Activated T-helper 1 cell treated with anti-CD3 and anti-CD28 coated beads, Interleukin-12 subunit alpha, Interleukin-12 subunit beta, Interleukin-2, Interleukin-4 antibody, amounts not matched to agents 30 ng/mL and 10 ng/mL and 1 ng/mL, durations not matched to agents 14 hours and 24 hours and 36 hours (primary cell): ENCODE measurements at regions of chr7 and their contacts with region 1.

Region 1: GRCh38 chr7:36389371-36390198 is at the start of gene ANLN:
- DNase-seq: peak; percentile 84
- H3K4me3 Mint-ChIP-seq: peak within 1 kb of the TSS; percentile 86
- H3K27ac Mint-ChIP-seq: peak within 1 kb of the TSS; percentile 78
- H3K4me1 Mint-ChIP-seq: peaks cover 37% of the 10 kb centered on the region
- H3K27me3 Mint-ChIP-seq: peaks cover 12% of the 10 kb centered on the region
- total RNA-seq, gene ANLN: 23.8 and 31.0 TPM in 2 replicates

Region 2: GRCh38 chr7:34991938-34992840 is 1397.4 kb before region 1 on chr7:
- intact Hi-C with region 1: loop called (anchors 2 kb)
- DNase-seq: no peak
- H3K4me3 Mint-ChIP-seq: no peak overlapping the region
- H3K27ac Mint-ChIP-seq: peak overlapping the region; percentile 77
- H3K4me1 Mint-ChIP-seq: peaks cover 17% of the 10 kb centered on the region
- H3K27me3 Mint-ChIP-seq: no peaks in the 10 kb centered on the region

Region 3: DNA sequence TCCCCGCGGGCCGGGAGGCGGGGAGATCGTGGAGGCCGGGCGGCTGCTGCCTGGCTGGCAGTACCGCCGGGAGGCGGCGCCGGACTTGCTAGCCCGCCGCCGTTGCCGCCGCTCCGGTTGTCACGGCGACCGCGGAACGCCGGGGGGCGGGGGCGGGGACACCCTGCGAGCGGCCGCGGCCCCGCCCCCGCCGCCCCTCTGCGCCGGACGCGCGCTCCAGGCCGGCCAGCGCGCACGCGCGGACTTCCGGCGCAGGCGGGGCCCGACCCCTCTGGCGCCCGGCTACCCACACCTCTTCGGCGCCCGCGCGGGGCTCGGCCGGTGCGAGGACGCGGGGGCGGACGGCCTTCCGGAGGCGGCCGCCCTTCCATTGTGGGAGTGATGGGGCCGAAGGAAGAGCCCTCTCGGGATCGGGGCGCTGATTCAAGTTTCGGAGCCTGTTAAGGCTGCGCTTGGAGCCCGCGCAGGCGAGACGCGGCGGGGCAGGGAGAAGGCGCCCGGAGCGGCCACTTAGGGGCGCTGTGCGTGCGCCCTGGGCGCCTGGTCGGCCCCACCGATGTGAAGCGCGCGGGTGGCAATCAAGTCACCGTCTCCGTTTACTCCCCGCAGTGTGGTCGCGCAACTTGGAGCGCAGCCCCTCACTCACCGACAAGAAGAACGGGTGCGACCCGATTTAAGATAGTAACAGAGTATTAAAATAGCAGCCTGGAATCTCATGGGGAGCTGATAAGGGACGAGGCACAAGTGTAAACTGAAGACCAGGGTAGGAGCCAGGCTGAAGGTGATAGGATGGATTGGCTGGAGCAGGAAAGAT is 1351.9 kb before region 1 on chr7:
- intact Hi-C with region 1: loop called (anchors 10 kb)
- DNase-seq: peak; percentile 85
- H3K4me3 Mint-ChIP-seq: peak overlapping the region; percentile 81
- H3K27ac Mint-ChIP-seq: peak overlapping the region; percentile 37
- H3K4me1 Mint-ChIP-seq: peaks cover 30% of the 10 kb centered on the region
- H3K27me3 Mint-ChIP-seq: peaks cover 13% of the 10 kb centered on the region

Region 4: GRCh38 chr7:36079446-36080025 is 310.0 kb before region 1 on chr7:
- intact Hi-C with region 1: no loop called
- DNase-seq: no peak
- H3K4me3 Mint-ChIP-seq: no peak overlapping the region
- H3K27ac Mint-ChIP-seq: no peak overlapping the region
- H3K4me1 Mint-ChIP-seq: no peaks in the 10 kb centered on the region
- H3K27me3 Mint-ChIP-seq: peaks cover 5% of the 10 kb centered on the region

Region 5: GRCh38 chr7:36115448-36116321 is 273.9 kb before region 1 on chr7:
- intact Hi-C with region 1: loop called (anchors 5 kb)
- DNase-seq: peak; percentile 60
- H3K4me3 Mint-ChIP-seq: peak overlapping the region; percentile 32
- H3K27ac Mint-ChIP-seq: peak overlapping the region; percentile 61
- H3K4me1 Mint-ChIP-seq: peaks cover 33% of the 10 kb centered on the region
- H3K27me3 Mint-ChIP-seq: peaks cover 26% of the 10 kb centered on the region

Region 6: DNA sequence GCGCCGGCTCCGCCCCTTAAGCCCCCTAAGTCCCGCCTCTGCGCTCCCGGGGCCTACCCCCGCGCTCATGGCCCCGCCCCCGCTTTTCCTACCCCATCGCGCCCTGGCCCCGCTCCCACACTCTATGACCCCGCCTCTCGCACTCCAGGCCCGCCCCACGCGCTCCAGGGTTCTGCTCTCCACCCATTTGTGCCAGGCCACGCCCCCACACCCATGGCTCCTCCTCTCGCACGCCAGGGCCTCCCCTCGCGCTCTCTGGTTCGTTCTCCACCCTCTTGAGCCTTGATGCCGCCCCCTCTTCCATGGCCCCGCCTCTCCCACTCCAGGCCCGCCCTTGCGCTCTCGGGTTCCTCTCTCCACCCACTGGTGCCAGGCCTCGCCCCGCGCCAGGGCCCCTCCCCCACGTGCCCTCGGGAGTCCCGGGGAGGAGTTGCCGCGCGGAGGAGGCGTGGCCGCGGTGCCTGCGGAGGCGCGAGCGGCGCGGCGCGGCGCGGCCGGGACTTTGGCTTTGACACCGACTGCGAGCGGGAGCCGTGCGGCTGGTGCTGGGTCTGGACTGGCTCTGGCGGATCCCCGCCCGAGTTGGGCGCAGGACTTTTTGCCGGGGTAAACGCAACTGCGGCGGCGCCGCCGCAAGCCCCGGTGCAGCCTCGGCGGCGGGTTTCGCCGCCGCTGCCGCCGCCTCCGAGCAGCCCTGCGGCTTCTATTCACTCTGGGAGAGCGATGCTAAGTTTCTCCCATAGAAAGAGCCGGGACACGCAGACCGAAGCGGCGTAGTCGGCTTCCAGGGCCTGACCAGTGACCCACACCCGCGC is 236.6 kb before region 1 on chr7 and contains the start of gene EEPD1:
- intact Hi-C with region 1: loop called (anchors 1 kb)
- DNase-seq: peak; percentile 99
- H3K4me3 Mint-ChIP-seq: peak within 1 kb of the TSS; percentile 78
- H3K27ac Mint-ChIP-seq: no peak within 1 kb of the TSS
- H3K4me1 Mint-ChIP-seq: peaks cover 13% of the 10 kb centered on the region
- H3K27me3 Mint-ChIP-seq: peaks cover 12% of the 10 kb centered on the region
- total RNA-seq, gene EEPD1: 0.91 and 1.5 TPM in 2 replicates

Region 7: DNA sequence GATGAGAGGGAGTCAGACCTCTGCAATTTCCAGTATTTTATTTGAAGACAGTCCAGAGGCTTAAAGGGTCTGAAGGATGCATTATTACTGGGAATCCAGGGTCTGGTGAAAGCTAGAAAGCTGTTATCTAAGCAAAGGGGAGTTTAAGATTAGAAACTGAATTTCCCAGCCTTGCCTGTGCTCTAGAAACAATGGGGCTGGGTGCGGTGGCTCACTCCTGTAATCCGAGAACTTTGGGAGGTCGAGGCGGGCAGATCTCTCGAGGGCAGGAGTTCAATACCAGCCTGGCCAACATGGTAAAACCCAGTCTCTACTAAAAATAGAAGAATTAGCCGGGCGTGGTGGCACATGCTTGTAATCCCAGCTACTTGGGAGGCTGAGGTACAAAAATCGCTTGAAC is 71.5 kb before region 1 on chr7:
- intact Hi-C with region 1: no loop called
- DNase-seq: no peak
- H3K4me3 Mint-ChIP-seq: no peak overlapping the region
- H3K27ac Mint-ChIP-seq: no peak overlapping the region
- H3K4me1 Mint-ChIP-seq: no peaks in the 10 kb centered on the region
- H3K27me3 Mint-ChIP-seq: peaks cover 4% of the 10 kb centered on the region

Region 8: DNA sequence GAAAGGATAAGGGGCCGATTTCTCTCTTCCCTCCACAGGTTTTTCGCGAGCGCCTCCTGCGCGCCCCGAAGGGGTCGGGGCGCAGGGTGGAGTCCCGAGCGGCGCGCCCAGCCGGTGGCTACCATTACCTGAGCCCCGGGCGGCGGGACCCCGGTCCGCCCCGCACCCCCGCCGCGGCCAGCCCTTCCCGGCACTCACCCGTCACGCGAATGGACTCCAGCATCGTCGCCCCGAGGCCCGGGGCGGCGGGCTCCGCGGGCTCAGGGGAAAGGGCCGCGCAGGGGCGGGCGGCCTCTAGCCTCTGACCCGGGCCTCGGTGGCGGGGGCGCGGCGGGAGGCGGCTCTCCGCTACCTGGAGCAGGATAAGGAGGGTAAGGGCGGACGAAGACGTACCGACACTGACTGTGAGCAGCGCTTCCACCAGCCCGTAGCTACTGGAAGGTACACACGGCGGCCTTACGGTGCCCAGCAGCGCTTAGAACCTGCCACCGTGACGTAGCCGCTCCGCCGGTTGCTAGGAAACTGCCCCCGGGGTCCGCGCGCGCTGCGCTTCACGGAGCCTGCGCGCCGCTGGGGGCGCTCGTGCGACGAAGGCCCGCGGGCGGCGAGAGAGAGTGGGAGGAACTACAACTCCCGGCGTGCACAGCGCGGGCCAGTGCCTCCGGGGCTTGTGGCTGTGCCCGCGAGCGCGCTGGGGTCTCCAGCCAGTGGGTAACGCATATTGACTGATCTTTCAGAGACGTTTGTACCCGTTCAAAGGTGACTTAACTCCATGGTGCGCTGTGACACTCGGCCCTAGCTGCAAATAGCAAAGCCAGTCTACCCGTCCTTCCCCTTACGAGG is 22.6 kb before region 1 on chr7:
- intact Hi-C with region 1: loop called (anchors 1 kb)
- DNase-seq: peak; percentile 91
- H3K4me3 Mint-ChIP-seq: peak overlapping the region; percentile 91
- H3K27ac Mint-ChIP-seq: peak overlapping the region; percentile 67
- H3K4me1 Mint-ChIP-seq: no peaks in the 10 kb centered on the region
- H3K27me3 Mint-ChIP-seq: peaks cover 31% of the 10 kb centered on the region

Region 9: GRCh38 chr7:37031571-37032257 is 642.1 kb after region 1 on chr7:
- intact Hi-C with region 1: loop called (anchors 5 kb)
- DNase-seq: peak; percentile 19
- H3K4me3 Mint-ChIP-seq: no peak overlapping the region
- H3K27ac Mint-ChIP-seq: peak overlapping the region; percentile 69
- H3K4me1 Mint-ChIP-seq: peaks cover 59% of the 10 kb centered on the region
- H3K27me3 Mint-ChIP-seq: no peaks in the 10 kb centered on the region